Endothelial cell of umbilical vein (primary cell): ENCODE measurements at regions of chr10 and their contacts with region 1.

Region 1: GRCh38 chr10:3785257-3785850 is 345 bp upstream of the KLF6 start:
- DNase-seq: peak; percentile 98
- H3K4me3 ChIP-seq: peak overlapping the region; percentile 22 to 95 (median 44)
- H3K27ac ChIP-seq: peak overlapping the region; percentile 98
- H3K4me1 ChIP-seq: peaks cover 26% of the 10 kb centered on the region
- H3K27me3 ChIP-seq: no peaks in the 10 kb centered on the region
- CTCF ChIP-seq: no peak
- POLR2A ChIP-seq: peak; percentile 99

Region 2: GRCh38 chr10:3239066-3239919 is 546.1 kb before region 1 on chr10:
- CTCF ChIA-PET with region 1: interaction called, 24 read pairs
- POLR2A ChIA-PET with region 1: no interaction called
- dilution Hi-C with region 1: no loop called
- intact Hi-C with region 1: no loop called
- DNase-seq: peak; percentile 78
- H3K4me3 ChIP-seq: no peak overlapping the region
- H3K27ac ChIP-seq: peak overlapping the region; percentile 80
- H3K4me1 ChIP-seq: peaks cover 11% of the 10 kb centered on the region
- H3K27me3 ChIP-seq: no peaks in the 10 kb centered on the region
- CTCF ChIP-seq: peak; percentile 86 to 87
- POLR2A ChIP-seq: no peak

Region 3: GRCh38 chr10:3828404-3829155 is 43.2 kb after region 1 on chr10:
- CTCF ChIA-PET with region 1: no interaction called
- POLR2A ChIA-PET with region 1: interaction called, 10 read pairs
- dilution Hi-C with region 1: no loop called
- intact Hi-C with region 1: no loop called
- DNase-seq: peak; percentile 84
- H3K4me3 ChIP-seq: peak overlapping the region; percentile 18 to 55 (median 27)
- H3K27ac ChIP-seq: peak overlapping the region; percentile 74
- H3K4me1 ChIP-seq: peaks cover 8% of the 10 kb centered on the region
- H3K27me3 ChIP-seq: no peaks in the 10 kb centered on the region
- CTCF ChIP-seq: no peak
- POLR2A ChIP-seq: no peak

Region 4: GRCh38 chr10:3924344-3924743 is 139.0 kb after region 1 on chr10:
- CTCF ChIA-PET with region 1: interaction called, 6 read pairs
- POLR2A ChIA-PET with region 1: interaction called, 7 read pairs
- dilution Hi-C with region 1: no loop called
- intact Hi-C with region 1: loop called (anchors 1 kb)
- DNase-seq: peak; percentile 98
- H3K4me3 ChIP-seq: no peak overlapping the region
- H3K27ac ChIP-seq: peak overlapping the region; percentile 99
- H3K4me1 ChIP-seq: peaks cover 29% of the 10 kb centered on the region
- H3K27me3 ChIP-seq: no peaks in the 10 kb centered on the region
- CTCF ChIP-seq: no peak
- POLR2A ChIP-seq: peak; percentile 32

Region 5: DNA sequence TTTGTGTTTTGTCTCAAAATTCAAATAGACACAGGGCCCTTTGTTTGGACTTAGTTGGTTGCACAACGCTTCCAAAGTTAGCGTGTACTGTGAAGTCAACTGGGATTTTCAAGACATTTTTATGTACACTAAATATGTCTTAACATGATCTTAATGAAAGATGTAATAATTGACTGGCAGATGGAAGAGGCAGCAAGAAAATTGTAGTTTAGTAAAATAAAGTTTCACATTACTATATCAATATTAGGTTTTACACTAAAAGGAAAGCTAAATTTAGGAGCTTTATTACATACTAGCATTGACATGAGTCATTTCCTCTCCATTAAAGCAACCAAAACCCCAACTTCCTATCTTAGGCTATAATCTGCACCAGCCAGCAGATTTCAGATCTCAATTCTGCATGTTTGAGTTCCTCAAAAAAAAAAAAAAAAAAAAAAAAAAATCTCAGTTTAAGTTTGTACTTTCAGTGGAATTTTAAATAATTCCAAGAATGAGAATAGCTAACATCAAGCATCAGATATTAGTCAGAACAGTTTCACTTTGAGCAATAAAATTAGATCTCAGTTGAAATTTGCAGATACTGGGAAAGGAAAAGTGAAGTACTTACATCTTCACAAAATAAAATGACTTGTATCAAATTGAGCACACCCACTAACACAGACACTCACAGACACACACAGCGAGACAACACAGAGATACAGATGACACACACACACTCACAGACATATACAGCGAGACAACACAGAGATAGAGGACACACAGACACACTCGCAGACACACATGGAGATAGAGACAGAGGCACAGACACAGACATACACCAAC is 346.3 kb after region 1 on chr10:
- CTCF ChIA-PET with region 1: interaction called, 3 read pairs
- POLR2A ChIA-PET with region 1: interaction called, 6 read pairs
- dilution Hi-C with region 1: no loop called
- intact Hi-C with region 1: loop called (anchors 1 kb)
- DNase-seq: peak; percentile 86
- H3K4me3 ChIP-seq: peak overlapping the region in 1 of 3 experiments; percentile 47
- H3K27ac ChIP-seq: peak overlapping the region; percentile 92
- H3K4me1 ChIP-seq: peaks cover 48% of the 10 kb centered on the region
- H3K27me3 ChIP-seq: no peaks in the 10 kb centered on the region
- CTCF ChIP-seq: no peak
- POLR2A ChIP-seq: no peak

Region 6: GRCh38 chr10:4372601-4373000 is 587.2 kb after region 1 on chr10:
- CTCF ChIA-PET with region 1: no interaction called
- POLR2A ChIA-PET with region 1: no interaction called
- dilution Hi-C with region 1: no loop called
- intact Hi-C with region 1: loop called (anchors 1 kb)
- DNase-seq: peak; percentile 93
- H3K4me3 ChIP-seq: no peak overlapping the region
- H3K27ac ChIP-seq: peak overlapping the region; percentile 91
- H3K4me1 ChIP-seq: peaks cover 14% of the 10 kb centered on the region
- H3K27me3 ChIP-seq: no peaks in the 10 kb centered on the region
- CTCF ChIP-seq: no peak
- POLR2A ChIP-seq: no peak

Region 7: DNA sequence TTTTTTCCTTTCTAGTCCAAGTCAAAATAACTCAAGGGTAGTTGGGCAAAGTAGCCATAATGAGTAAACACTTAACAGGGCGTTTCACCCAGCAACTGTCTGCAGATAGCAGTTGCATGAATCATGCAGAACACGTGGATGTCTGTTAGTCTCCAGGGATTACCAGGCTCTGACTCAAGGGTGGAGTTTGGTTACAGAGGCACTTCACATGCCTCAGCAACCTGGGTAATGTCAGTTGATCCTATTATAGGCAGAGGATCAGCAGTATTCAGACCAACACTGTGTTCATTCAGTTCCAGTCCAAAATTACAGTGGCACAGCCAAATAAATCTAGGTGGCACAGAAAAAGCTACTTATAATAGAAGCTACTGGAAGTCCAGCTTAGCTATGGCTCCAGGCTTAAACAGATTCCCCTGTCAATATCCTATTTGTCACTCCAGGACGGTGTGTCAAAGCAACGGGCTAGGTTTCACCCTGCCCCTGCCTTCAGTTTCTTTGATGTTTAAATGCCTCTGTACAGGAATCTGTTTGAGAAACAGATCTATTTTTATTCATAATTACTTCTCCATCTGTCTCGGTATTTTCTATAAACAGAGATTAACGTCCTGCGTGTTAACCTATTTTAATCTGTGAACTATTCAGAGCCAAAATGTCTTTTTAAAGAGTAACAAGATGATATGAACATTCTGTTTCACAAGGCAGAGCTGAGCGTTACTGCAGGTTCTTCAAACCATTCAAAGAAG is 878.0 kb after region 1 on chr10:
- CTCF ChIA-PET with region 1: no interaction called
- POLR2A ChIA-PET with region 1: no interaction called
- dilution Hi-C with region 1: no loop called
- intact Hi-C with region 1: loop called (anchors 2 kb)
- DNase-seq: peak; percentile 97
- H3K4me3 ChIP-seq: no peak overlapping the region
- H3K27ac ChIP-seq: peak overlapping the region; percentile 97
- H3K4me1 ChIP-seq: peaks cover 23% of the 10 kb centered on the region
- H3K27me3 ChIP-seq: no peaks in the 10 kb centered on the region
- CTCF ChIP-seq: no peak
- POLR2A ChIP-seq: peak; percentile 65